Prostate gland (tissue), 2 donors: ENCODE measurements at regions of chr3 and their contacts with region 1.

Region 1: GRCh38 chr3:186361762-186362536 is at the start of gene DGKG:
- DNase-seq: no peak
- H3K4me3 ChIP-seq: peak within 1 kb of the TSS; percentile 25 to 32
- H3K27ac ChIP-seq: no peak within 1 kb of the TSS
- H3K4me1 ChIP-seq: no peaks in the 10 kb centered on the region
- H3K27me3 ChIP-seq: peaks cover 7% of the 10 kb centered on the region
- CTCF ChIP-seq: no peak
- POLR2A ChIP-seq: no peak
- total RNA-seq, gene DGKG: 1.2 to 2.2 TPM

Region 2: DNA sequence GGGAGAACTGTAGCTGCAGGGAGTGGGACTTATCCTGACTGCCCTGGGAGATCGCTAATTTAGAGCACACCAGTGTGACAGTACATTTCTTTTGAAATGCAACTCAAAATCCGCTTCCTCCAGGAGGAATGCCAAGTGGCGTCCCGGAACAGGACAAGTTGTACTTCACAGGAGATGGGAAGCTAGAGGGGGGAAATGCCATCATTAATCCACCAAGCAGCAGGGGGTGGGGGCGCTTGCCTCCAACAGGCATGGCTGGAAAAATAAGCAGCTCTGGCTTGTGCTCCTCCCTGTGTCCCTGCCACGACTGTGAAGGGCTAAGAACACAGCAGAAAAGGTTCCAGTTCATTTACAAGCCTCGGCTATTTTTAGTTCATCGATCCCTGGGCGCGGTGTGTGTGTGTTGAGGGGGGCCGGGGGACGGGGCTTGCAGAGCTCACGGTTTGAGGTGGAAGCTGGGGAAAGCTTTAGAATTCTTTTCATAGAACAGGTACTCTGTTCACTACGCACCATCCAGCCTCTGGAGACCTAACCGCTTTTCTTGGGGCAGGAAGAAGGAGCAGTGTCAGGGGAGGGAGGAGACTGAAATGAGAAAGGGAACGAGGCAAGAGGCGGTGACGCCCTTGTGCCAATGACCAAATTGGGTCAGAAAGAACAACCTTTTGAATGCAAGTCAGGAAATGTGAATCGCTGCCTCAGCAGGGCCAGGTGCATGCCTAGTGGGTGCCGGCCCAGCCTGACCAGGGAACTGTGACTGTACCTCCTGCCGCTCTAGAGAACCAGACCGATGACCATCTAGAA is 51.9 kb after region 1 on chr3:
- intact Hi-C with region 1: loop called (anchors 5 kb)
- DNase-seq: peak; percentile 23
- H3K4me3 ChIP-seq: peak overlapping the region; percentile 22 to 25
- H3K27ac ChIP-seq: peak overlapping the region; percentile 56 to 65
- H3K4me1 ChIP-seq: no peaks in the 10 kb centered on the region
- H3K27me3 ChIP-seq: no peaks in the 10 kb centered on the region
- CTCF ChIP-seq: no peak
- POLR2A ChIP-seq: no peak